Mucosa of descending colon (tissue), 3 donors: ENCODE measurements at regions of chr15 and their contacts with region 1.

Region 1: GRCh38 chr15:101251830-101252820 is at the start of gene CHSY1:
- DNase-seq: peak; percentile 90 to 94 (median 93)
- ATAC-seq: peak; percentile 90
- H3K4me3 ChIP-seq: peak within 1 kb of the TSS; percentile 46
- H3K4me1 ChIP-seq: peaks cover 8% of the 10 kb centered on the region
- CTCF ChIP-seq: no peak
- total RNA-seq, gene CHSY1: 7.7 to 15.5 (median 12.6) TPM

Region 2: DNA sequence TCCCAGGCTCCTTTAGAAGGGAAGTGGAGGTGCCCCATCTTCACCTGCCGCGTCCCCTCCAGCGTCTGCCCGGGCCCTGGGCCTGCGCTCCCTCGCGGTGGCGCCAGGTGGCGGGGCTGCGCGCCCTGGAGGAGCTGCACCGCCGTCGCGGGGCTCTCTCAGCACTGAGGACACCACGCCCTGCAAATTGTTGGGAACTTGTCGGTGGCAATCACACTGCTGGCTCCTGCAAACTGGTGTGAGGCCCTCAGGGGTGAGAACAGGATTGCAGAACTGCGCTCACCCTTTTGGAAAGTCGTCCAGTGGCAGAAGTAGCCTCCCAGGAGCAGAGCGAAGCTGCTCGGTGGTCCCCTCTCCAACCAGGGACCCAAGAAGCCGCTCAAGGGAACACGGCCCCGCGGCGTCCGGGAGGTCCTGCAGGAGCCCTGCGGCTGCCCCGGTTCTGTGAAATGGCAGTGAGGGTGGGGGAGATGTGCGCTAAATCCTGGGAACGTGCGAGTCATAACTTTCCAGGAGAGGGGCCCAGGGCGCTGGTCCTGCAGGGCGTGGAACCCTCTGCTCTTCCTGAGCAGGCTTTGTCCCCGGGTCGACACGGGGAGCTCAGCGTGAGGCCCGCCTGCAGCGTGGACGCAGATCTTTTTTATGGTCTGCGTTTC is 334.0 kb before region 1 on chr15:
- intact Hi-C with region 1: loop called in 1 of 2 experiments (anchors 10 kb)
- DNase-seq: peak; percentile 90 to 91 (median 91)
- ATAC-seq: peak; percentile 93
- H3K4me3 ChIP-seq: peak overlapping the region; percentile 54
- H3K4me1 ChIP-seq: peaks cover 7% of the 10 kb centered on the region
- CTCF ChIP-seq: peak; percentile 94

Region 3: DNA sequence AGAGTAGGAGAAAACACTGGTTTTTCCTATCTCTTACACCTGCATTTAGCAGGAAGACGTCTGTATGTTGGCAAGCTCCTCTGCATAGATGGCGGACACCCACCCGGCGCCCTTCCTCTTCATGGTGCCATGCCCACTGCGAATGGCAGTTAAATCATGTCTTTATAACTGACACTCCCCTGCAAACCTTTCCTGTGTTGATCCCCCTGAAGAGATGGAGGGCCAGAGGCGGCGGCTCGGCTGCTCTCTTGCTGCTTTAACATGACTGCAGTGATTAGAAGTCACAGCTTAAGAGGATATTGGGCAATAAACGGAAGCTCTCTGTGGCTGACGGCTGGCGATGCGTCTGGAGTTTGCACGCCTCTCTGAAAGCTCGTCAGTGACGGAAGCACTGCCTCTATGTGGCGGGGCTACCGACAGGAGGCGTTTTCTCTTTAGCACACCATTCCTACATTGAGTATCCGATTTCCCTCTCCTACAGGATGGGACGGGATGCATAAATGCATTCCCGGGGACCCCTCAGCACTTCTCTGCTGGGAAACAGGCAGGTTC is 68.5 kb after region 1 on chr15:
- intact Hi-C with region 1: no loop called
- DNase-seq: peak in 2 of 3 donors; percentile 44 to 50
- ATAC-seq: peak; percentile 56
- H3K4me3 ChIP-seq: no peak overlapping the region
- H3K4me1 ChIP-seq: peaks cover 3% of the 10 kb centered on the region
- CTCF ChIP-seq: no peak

Region 4: GRCh38 chr15:101381671-101382212 is 129.6 kb after region 1 on chr15:
- intact Hi-C with region 1: no loop called
- DNase-seq: no peak
- ATAC-seq: no peak
- H3K4me3 ChIP-seq: no peak overlapping the region
- H3K4me1 ChIP-seq: no peaks in the 10 kb centered on the region
- CTCF ChIP-seq: no peak

Region 5: GRCh38 chr15:101568309-101568708 is 316.2 kb after region 1 on chr15:
- intact Hi-C with region 1: no loop called
- DNase-seq: no peak
- ATAC-seq: no peak
- H3K4me3 ChIP-seq: no peak overlapping the region
- H3K4me1 ChIP-seq: peaks cover 2% of the 10 kb centered on the region
- CTCF ChIP-seq: no peak